GM12878 (cell line): ENCODE measurements at regions of chr15 and their contacts with region 1.

Region 1: DNA sequence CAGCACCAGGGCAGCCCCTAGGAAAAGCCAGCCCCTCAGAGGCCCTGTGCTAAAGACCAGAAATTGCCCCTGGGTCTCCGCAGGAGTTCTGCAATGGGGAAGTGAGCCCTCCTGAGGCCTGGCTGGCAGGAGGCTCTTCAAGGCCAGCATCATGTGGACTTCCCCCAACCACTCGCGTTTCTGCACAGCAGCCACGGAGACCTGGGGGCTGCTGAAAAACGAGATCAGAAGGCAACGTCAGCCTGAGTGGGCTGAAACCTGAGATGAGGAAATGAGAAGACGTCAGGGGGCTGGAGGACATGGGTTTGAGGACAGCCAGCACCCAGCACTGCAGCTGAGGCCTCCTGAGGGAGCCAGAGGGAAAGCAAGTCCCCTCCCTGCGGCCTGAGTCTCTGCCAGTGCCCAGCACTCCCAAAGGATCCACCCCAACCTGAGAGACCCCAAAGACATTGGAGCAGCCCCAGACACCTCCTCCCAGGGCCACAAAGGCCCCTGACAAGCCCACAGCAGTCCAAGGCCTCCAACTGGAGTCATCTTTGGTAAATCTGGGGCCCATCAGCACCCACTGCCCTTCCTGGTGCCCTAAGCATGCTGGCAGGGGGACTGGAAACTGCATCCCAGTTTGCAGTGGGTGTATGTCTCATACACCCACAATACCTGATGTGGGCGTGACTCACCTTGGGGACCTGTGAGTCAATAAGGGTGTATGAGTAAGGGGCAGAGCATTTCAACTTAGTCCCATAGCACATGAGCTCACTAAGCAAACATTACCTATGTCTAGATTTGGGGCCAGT is 29.2 kb upstream of the CYP11A1 start:
- DNase-seq: peak; percentile 93
- ATAC-seq: peak; percentile 57
- H3K4me3 ChIP-seq: peak overlapping the region; percentile 54
- H3K27ac ChIP-seq: peak overlapping the region; percentile 100
- H3K4me1 ChIP-seq: peaks cover 94% of the 10 kb centered on the region
- H3K27me3 ChIP-seq: no peaks in the 10 kb centered on the region
- CTCF ChIP-seq: peak in 2 of 3 experiments; percentile 17 to 23; a peak in 2 of 6 replicates
- EP300 ChIP-seq: peak; percentile 95 to 96; a peak in 3 of 4 replicates
- POLR2A ChIP-seq: no peak
- RAD21 ChIP-seq: peak; percentile 27; the same call in 1 of the 2 replicates

Region 2: DNA sequence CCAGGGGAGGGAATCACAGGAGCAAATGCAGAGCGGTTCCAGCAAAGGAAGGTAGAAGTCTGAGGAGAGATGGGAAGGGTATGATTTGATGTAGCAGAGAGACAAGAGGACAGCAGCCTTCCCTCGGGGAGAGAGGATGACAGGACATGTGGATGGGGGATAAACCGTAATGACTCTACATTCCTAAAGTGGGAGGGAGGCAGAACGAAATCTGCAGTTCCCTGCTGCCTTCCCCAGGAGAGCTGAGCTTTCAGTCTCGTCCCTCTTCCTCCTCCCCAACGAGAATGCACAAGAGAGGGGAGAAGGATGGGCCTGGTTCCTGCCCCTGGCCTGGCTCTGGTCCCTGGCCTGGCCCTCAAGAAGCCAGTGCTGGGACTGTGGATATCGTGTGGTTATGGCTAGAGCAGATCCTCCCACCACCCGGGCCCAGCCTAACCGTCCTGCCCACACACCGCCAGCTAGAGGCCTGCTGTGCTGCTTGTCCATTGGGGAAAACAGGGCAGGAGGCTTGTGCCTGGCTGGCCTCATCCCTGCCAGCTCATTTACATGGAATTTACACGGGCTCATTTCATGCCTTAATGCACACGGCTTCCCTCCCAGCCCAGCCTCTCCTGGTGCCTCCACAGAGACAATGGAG is 10.5 kb after region 1 on chr15:
- CTCF ChIA-PET with region 1: interaction called, 5 read pairs
- POLR2A ChIA-PET with region 1: interaction called, 48 read pairs
- RAD21 ChIA-PET with region 1: interaction called, 31 read pairs
- SMC1A ChIA-PET with region 1: interaction called, 48 read pairs
- in situ Hi-C with region 1: no loop called
- intact Hi-C with region 1: loop called (anchors 1 kb)
- DNase-seq: no peak
- ATAC-seq: no peak
- H3K4me3 ChIP-seq: no peak overlapping the region
- H3K27ac ChIP-seq: no peak overlapping the region
- H3K4me1 ChIP-seq: peaks cover 41% of the 10 kb centered on the region
- H3K27me3 ChIP-seq: no peaks in the 10 kb centered on the region
- CTCF ChIP-seq: no peak
- EP300 ChIP-seq: no peak
- POLR2A ChIP-seq: no peak
- RAD21 ChIP-seq: no peak

Region 3: DNA sequence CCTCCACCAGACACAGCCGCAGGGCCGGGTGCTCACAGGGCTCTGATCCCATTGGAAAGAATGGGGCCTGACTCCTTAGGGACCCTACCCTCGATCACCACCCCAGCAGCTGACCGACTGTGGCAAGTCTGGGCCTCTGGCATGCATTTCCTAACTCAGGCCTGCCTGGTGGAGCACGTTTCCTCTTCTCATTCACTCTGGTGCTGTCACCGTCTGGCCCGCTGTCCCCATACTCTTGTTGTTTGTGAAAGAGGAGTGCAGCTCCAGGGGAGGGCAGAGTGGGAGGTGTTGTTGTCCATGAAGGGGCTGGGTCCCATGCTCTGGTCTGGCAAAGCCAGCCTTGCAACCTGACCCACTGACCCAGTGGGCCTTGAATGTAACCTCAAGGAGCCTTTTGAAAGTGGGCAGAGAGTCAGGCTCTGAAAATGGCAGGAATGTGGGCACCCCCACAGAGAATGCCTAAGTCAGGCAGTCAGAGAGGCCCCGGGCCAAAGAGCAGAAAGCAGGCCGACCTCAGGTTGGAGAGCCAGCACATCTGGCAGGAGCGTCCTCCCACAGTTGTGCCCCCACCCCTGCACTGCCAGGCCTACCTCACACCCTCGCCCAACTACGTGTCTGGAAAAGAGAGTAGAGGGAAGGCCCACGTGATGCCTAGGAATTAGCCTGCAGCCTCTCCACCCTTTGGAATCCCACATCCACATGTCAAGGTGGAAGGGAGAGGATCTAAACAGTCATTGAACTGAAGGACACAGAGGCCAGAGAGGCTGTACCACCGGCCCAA is 26.2 kb after region 1 on chr15:
- CTCF ChIA-PET with region 1: interaction called, 187 read pairs
- POLR2A ChIA-PET with region 1: interaction called, 325 read pairs
- RAD21 ChIA-PET with region 1: interaction called, 496 read pairs
- SMC1A ChIA-PET with region 1: interaction called, 544 read pairs
- in situ Hi-C with region 1: no loop called
- intact Hi-C with region 1: no loop called
- DNase-seq: no peak
- ATAC-seq: peak; percentile 44
- H3K4me3 ChIP-seq: peak overlapping the region; percentile 98
- H3K27ac ChIP-seq: peak overlapping the region; percentile 49
- H3K4me1 ChIP-seq: peaks cover 79% of the 10 kb centered on the region
- H3K27me3 ChIP-seq: no peaks in the 10 kb centered on the region
- CTCF ChIP-seq: no peak; a peak in 1 of 6 replicates
- EP300 ChIP-seq: no peak
- POLR2A ChIP-seq: peak; percentile 48
- RAD21 ChIP-seq: no peak

Region 4: GRCh38 chr15:74433592-74434262 is 37.1 kb after region 1 on chr15 and contains the start of gene SEMA7A:
- CTCF ChIA-PET with region 1: interaction called, 187 read pairs
- POLR2A ChIA-PET with region 1: interaction called, 325 read pairs
- RAD21 ChIA-PET with region 1: interaction called, 496 read pairs
- SMC1A ChIA-PET with region 1: interaction called, 544 read pairs
- in situ Hi-C with region 1: no loop called
- intact Hi-C with region 1: loop called (anchors 2 kb)
- DNase-seq: peak; percentile 57
- ATAC-seq: peak; percentile 81
- H3K4me3 ChIP-seq: peak within 1 kb of the TSS; percentile 98
- H3K27ac ChIP-seq: peak within 1 kb of the TSS; percentile 87
- H3K4me1 ChIP-seq: peaks cover 32% of the 10 kb centered on the region
- H3K27me3 ChIP-seq: no peaks in the 10 kb centered on the region
- CTCF ChIP-seq: no peak
- EP300 ChIP-seq: peak in 1 of 2 experiments; percentile 25; a peak in 2 of 4 replicates
- POLR2A ChIP-seq: peak; percentile 98
- RAD21 ChIP-seq: no peak
- polyA plus RNA-seq, gene SEMA7A: 0.08 to 1.1 TPM

Region 5: GRCh38 chr15:74781431-74782258 is 385.0 kb after region 1 on chr15 and contains the start of gene CSK:
- CTCF ChIA-PET with region 1: no interaction called
- POLR2A ChIA-PET with region 1: interaction called, 5 read pairs
- RAD21 ChIA-PET with region 1: interaction called, 5 read pairs
- SMC1A ChIA-PET with region 1: interaction called, 7 read pairs
- in situ Hi-C with region 1: loop called (anchors 5 kb)
- intact Hi-C with region 1: loop called (anchors 2 kb)
- DNase-seq: no peak
- ATAC-seq: no peak; the same call in 2 of the 3 replicates
- H3K4me3 ChIP-seq: peak within 1 kb of the TSS; percentile 94
- H3K27ac ChIP-seq: peak within 1 kb of the TSS; percentile 96
- H3K4me1 ChIP-seq: peaks cover 59% of the 10 kb centered on the region
- H3K27me3 ChIP-seq: no peaks in the 10 kb centered on the region
- CTCF ChIP-seq: peak; percentile 52 to 62 (median 62); a peak in 5 of 6 replicates
- EP300 ChIP-seq: peak in 1 of 2 experiments; percentile 6; a peak in 1 of 4 replicates
- POLR2A ChIP-seq: peak; percentile 78
- RAD21 ChIP-seq: peak; percentile 28; the same call in 1 of the 2 replicates
- polyA plus RNA-seq, gene CSK: 3.4 to 11.5 TPM

Region 6: DNA sequence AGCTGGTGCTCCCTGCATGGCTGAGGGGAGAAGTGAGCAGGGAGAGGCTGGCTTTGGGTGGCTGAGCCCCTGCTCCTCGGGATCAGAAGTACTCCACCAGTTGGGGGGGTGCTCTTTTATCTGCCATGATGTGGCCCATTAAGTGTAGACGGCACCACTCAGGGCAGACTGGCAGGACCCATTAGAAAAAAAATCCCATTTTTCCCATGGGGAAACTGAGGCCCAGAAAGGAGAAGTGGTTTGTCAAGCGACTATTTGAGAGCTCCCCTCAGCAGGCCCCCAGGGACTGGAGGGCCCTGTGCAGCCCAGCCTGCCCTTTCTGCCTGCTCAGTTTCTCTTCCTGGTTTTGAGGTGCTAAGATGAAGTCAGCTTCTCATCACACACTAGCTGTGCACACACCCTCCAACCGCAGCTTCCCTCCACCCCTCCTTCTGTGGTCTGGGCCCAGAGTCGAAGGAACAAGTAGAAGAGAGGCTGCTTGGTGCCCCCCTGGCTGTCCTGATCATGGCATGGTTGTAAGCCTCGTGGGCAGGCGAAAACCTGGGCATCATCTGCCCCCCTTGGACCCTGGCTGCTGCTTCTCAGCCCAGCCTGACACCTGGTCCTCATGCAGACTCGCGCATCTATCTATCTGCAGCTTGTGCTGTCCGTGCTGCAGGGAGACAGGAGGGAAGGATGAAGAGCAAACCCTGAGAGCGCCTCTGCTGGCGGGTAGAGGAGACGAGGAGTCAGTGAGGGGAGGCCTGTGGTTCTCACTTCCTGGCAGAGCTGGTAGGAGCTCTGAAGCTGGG is 390.8 kb after region 1 on chr15:
- CTCF ChIA-PET with region 1: interaction called, 3 read pairs
- POLR2A ChIA-PET with region 1: interaction called, 4 read pairs
- RAD21 ChIA-PET with region 1: interaction called, 4 read pairs
- SMC1A ChIA-PET with region 1: interaction called, 7 read pairs
- in situ Hi-C with region 1: loop called (anchors 5 kb)
- intact Hi-C with region 1: loop called (anchors 2 kb)
- DNase-seq: peak; percentile 97
- ATAC-seq: peak; percentile 58
- H3K4me3 ChIP-seq: peak overlapping the region; percentile 94
- H3K27ac ChIP-seq: peak overlapping the region; percentile 96
- H3K4me1 ChIP-seq: peaks cover 55% of the 10 kb centered on the region
- H3K27me3 ChIP-seq: no peaks in the 10 kb centered on the region
- CTCF ChIP-seq: peak; percentile 79 to 93 (median 82)
- EP300 ChIP-seq: peak; percentile 83 to 88
- POLR2A ChIP-seq: peak; percentile 76
- RAD21 ChIP-seq: peak; percentile 45; the same call in 1 of the 2 replicates

Region 7: DNA sequence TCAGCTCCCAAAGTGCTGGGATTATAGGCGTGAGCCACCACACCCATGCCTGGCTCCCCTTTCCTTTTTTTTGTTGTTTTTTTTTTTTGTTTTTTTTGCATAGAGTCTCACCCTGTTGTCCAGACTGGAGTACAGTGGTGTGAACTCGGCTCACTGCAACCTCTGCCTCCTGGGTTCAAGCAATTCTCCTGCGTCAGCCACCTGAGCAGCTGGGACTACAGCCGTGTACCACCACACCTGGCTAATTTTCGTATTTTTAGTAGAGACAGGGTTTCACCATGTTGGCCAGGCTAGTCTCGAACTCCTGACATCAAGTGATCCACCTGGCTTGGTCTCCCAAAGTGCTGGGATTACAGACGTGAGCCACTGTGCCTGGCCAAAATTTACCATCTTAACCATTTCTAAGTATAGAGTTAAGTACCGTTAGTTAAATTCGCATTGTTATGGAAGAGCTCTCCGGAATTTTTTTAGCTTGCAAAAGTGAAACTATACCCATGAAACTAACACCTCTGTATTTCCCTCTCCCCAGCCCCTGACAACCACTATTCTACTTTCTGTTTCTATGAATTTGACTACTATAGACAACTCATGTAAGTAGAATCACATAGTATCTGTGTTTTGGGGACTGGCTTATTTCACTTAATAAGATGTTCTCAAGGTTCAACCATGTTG is 734.1 kb after region 1 on chr15:
- CTCF ChIA-PET with region 1: no interaction called
- POLR2A ChIA-PET with region 1: no interaction called
- RAD21 ChIA-PET with region 1: no interaction called
- SMC1A ChIA-PET with region 1: no interaction called
- in situ Hi-C with region 1: no loop called
- intact Hi-C with region 1: loop called (anchors 10 kb)
- DNase-seq: peak; percentile 89
- ATAC-seq: peak; percentile 92
- H3K4me3 ChIP-seq: peak overlapping the region; percentile 13; the same call in 1 of the 2 replicates
- H3K27ac ChIP-seq: peak overlapping the region; percentile 99
- H3K4me1 ChIP-seq: peaks cover 67% of the 10 kb centered on the region
- H3K27me3 ChIP-seq: no peaks in the 10 kb centered on the region
- CTCF ChIP-seq: no peak
- EP300 ChIP-seq: peak; percentile 55 to 82; a peak in 3 of 4 replicates
- POLR2A ChIP-seq: no peak
- RAD21 ChIP-seq: 0 out of 2 replicates have a peak, but pooled peaks have one; percentile 9